ENCODE measurements at regions of chr5 and their contacts with region 1.

Region 1: GRCh38 chr5:146744068-146744745 is 134.3 kb downstream of the PPP2R2B start:
- DNase-seq: peak; percentile 36
- ATAC-seq: peak; percentile 18; the same call in 1 of the 2 replicates
- H3K4me3 ChIP-seq: no peak overlapping the region
- H3K27ac ChIP-seq: no peak overlapping the region
- H3K4me1 ChIP-seq: peaks cover 3% of the 10 kb centered on the region; the same call in 1 of the 2 replicates
- H3K27me3 ChIP-seq: no peaks in the 10 kb centered on the region
- CTCF ChIP-seq: no peak

Region 2: DNA sequence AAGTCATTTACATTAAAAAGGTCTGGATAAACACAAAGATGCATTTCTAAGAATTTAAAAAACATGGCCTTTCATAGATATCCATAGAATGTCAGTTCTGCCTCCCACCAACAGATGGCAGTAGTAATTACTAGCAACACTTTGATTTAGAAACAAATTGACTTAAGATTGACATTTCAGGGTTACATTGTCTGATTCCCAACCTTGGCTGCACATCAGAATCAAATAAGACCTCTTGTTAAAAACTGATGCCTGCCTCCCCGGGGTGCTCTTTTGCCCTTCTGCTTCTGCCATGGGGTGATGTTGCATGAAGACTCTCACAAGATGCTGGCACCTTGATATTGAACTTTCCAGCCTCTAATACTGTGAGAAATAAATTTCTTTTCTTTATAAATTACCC is 82.0 kb before region 1 on chr5:
- CTCF ChIA-PET with region 1: no interaction called
- POLR2A ChIA-PET with region 1: no interaction called
- intact Hi-C with region 1: no loop called
- DNase-seq: peak; percentile 74
- ATAC-seq: no peak
- H3K4me3 ChIP-seq: no peak overlapping the region
- H3K27ac ChIP-seq: no peak overlapping the region
- H3K4me1 ChIP-seq: no peaks in the 10 kb centered on the region
- H3K27me3 ChIP-seq: peaks cover 46% of the 10 kb centered on the region
- CTCF ChIP-seq: peak; percentile 89

Region 3: DNA sequence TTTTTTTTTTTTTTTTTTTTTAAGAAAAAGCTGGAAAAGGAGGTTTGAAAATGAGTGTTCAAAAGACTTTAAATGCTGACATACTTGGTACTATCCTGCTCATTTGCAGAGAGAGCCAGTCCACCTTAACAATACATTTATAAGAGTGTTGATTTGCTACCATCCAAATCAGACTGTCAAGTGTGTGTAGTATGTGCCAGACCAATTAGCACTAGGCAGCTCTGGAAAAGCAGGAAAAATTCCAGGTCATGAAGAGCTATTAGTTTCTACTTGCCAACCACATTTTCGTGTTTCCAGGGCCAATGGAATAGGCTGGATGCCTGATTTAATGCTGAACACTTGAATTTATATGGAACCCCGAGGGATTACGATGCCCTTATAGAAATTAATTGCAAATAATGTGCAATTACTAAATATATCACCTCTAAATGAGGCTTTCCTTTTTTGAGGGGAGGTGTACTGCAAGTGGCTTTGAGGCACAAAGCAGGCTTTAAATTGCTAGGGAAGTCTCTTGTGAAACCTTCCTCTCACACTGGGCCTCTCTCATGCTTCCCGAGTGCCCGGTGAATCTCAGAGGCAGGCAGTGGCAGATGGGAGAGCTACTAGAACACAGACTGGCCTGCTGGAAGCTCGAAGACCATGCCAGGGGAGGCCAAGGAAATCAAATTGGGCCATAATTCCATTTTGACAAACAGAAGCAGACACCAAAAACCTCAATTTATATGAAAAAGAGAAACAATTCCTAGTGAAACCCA is 44.4 kb before region 1 on chr5:
- CTCF ChIA-PET with region 1: interaction called, 10 read pairs
- POLR2A ChIA-PET with region 1: no interaction called
- intact Hi-C with region 1: no loop called
- DNase-seq: no peak
- ATAC-seq: no peak
- H3K4me3 ChIP-seq: no peak overlapping the region
- H3K27ac ChIP-seq: no peak overlapping the region
- H3K4me1 ChIP-seq: no peaks in the 10 kb centered on the region
- H3K27me3 ChIP-seq: peaks cover 56% of the 10 kb centered on the region
- CTCF ChIP-seq: no peak